ENCODE measurements at regions of chr14 and their contacts with region 1.

Region 1: GRCh38 chr14:68788996-68789820 is 3.7 kb downstream of the ZFP36L1 start:
- DNase-seq: peak; percentile 84 to 86
- H3K4me3 ChIP-seq: peak overlapping the region; percentile 78 to 96
- H3K27ac ChIP-seq: peak overlapping the region; percentile 96 to 99
- H3K4me1 ChIP-seq: no peaks in the 10 kb centered on the region
- H3K27me3 ChIP-seq: no peaks in the 10 kb centered on the region
- CTCF ChIP-seq: peak; percentile 72 to 84 (median 76)
- POLR2A ChIP-seq: no peak

Region 2: GRCh38 chr14:68248481-68249255 is 540.5 kb before region 1 on chr14:
- intact Hi-C with region 1: loop called (anchors 5 kb)
- DNase-seq: peak in 1 of 2 donors; percentile 46
- H3K4me3 ChIP-seq: no peak overlapping the region
- H3K27ac ChIP-seq: peak overlapping the region; percentile 90 to 94
- H3K4me1 ChIP-seq: peaks cover 36 to 43% of the 10 kb centered on the region in 2 donors
- H3K27me3 ChIP-seq: no peaks in the 10 kb centered on the region
- CTCF ChIP-seq: peak; percentile 59 to 76 (median 68)
- POLR2A ChIP-seq: no peak

Region 3: GRCh38 chr14:68548194-68549056 is 240.8 kb before region 1 on chr14:
- intact Hi-C with region 1: loop called (anchors 10 kb)
- DNase-seq: peak; percentile 95 to 98
- H3K4me3 ChIP-seq: no peak overlapping the region
- H3K27ac ChIP-seq: peak overlapping the region; percentile 98 to 99
- H3K4me1 ChIP-seq: peaks cover 20 to 42% of the 10 kb centered on the region in 2 donors
- H3K27me3 ChIP-seq: no peaks in the 10 kb centered on the region
- CTCF ChIP-seq: no peak
- POLR2A ChIP-seq: peak; percentile 21 to 33

Region 4: DNA sequence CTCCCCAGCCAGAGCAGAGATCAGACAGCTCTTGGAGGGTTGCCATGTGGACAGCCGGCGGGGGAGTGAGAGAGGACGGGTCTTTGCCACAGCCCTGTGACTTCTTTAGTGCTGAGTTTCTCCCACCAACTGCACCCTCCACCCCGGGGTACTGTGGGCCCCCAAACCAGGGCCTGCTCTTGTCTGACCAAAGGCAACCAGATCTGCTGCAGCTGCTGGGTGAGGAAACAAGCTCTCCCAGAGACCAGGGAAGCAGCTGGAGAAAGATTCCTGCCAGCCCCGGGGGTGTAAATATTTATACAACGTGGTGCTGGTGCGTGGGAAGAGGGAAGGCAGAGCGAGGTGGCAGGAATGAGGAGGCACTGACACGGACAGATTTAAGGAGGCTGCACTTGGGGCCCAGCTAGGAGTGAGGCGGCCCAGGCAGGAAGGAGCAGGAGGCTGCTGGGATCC is 18.0 kb after region 1 on chr14:
- intact Hi-C with region 1: no loop called
- DNase-seq: peak; percentile 70 to 74
- H3K4me3 ChIP-seq: no peak overlapping the region
- H3K27ac ChIP-seq: peak overlapping the region; percentile 80 to 95
- H3K4me1 ChIP-seq: peaks cover 5 to 29% of the 10 kb centered on the region in 2 donors
- H3K27me3 ChIP-seq: no peaks in the 10 kb centered on the region
- CTCF ChIP-seq: no peak
- POLR2A ChIP-seq: no peak

Measured in uterus (tissue), 4 donors.